ENCODE measurements at regions of chr7 and their contacts with region 1.

Region 1: DNA sequence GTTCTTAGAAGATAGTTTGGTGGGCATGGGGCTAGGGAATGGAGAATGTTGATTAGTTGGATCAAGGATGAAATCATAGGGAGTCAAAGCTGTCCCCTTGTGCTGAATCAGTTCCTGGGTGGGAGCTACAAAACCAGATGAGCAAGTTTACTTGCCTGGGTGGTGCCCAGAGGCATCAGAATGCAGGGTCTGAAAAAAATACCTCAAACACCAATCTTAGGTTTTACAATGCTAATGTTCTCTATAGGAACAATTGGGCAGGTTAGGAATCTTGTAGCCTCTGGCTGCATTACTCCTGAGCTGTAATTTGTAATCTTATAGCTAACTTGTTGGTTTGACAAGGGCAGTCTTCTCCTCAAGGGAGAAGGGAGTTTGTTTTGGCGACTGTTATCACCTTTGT is 34.4 kb downstream of the LHFPL3 start:
- DNase-seq: no peak
- H3K4me3 ChIP-seq: no peak overlapping the region
- H3K27ac ChIP-seq: no peak overlapping the region
- H3K4me1 ChIP-seq: no peaks in the 10 kb centered on the region
- H3K27me3 ChIP-seq: no peaks in the 10 kb centered on the region
- CTCF ChIP-seq: no peak

Region 2: GRCh38 chr7:104299323-104299722 is 63.4 kb before region 1 on chr7:
- dilution Hi-C with region 1: loop called (anchors 5 kb)
- DNase-seq: no peak
- H3K4me3 ChIP-seq: no peak overlapping the region
- H3K27ac ChIP-seq: no peak overlapping the region
- H3K4me1 ChIP-seq: no peaks in the 10 kb centered on the region
- H3K27me3 ChIP-seq: no peaks in the 10 kb centered on the region
- CTCF ChIP-seq: no peak

Region 3: DNA sequence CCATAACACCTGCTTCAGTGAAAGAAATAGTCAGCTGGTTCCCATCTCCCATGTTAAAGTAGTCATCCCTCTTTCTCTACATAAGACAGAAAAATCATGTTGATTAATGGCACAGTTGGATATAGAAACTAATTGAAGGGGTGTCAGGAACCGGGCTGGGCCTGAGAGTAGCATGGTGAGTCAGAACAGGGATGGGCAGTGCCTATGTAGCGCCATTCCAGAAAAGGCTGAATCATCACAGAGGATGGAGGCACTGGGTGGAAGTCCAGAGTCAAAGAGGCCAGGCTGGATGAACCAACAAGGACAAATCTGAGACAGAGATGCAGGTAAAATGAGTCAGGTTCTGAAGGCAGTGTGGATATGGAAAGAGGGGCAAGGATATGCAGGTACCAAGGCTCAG is 166.8 kb after region 1 on chr7:
- dilution Hi-C with region 1: no loop called
- DNase-seq: no peak
- H3K4me3 ChIP-seq: no peak overlapping the region
- H3K27ac ChIP-seq: no peak overlapping the region
- H3K4me1 ChIP-seq: no peaks in the 10 kb centered on the region
- H3K27me3 ChIP-seq: no peaks in the 10 kb centered on the region
- CTCF ChIP-seq: no peak